ENCODE measurements at regions of chr16 and their contacts with region 1.

Region 1: DNA sequence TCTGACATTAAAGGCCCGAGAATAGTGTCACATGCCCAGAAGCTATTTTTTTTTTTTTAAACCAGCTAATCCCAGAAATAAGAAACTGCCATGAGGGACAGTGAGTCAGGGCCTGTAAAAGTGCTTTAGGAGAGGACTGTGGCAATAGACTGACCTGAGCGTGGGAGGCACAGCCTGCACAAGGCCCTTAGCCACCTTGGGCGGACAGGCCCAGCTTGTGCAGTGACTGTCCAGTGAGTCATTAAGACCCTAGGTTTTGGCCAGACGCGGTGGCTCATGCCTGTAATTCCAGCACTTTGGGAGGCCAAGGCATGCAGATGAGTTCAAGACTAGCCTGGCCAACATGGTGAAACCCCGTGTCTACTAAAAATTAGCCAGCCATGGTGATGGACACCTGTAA is 343.0 kb upstream of the ZFHX3 start:
- DNase-seq: no peak

Region 2: GRCh38 chr16:73337373-73338296 is 53.3 kb before region 1 on chr16:
- intact Hi-C with region 1: no loop called
- DNase-seq: no peak

Region 3: DNA sequence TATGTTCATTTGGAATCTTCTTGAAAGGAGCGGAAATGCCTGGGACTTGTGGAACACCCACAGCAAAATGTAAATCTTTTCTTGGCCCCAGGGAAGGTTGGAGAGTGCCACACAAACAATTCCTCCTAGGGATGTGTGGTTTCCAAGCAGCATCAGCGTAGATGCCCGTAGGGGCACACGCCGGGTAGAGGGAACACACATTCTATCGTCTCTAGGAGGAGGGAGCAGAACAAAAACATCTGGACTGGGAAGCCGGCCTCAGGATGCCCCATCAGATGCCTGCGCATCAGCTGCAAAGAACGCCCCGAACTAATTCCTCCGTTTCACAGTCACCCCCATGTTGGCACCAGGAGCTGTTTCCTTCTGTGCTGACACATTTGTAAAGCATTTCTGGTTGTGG is 14.9 kb after region 1 on chr16:
- intact Hi-C with region 1: loop called in 1 of 2 experiments (anchors 2 kb)
- DNase-seq: no peak

Measured in posterior vena cava (tissue), 2 donors.